Sciatic nerve (tissue), 2 donors: ENCODE measurements at regions of chr22 and their contacts with region 1.

Region 1: GRCh38 chr22:29979777-29980321 is 96.9 kb downstream of the MTMR3 start:
- DNase-seq: no peak
- ATAC-seq: no peak

Region 2: DNA sequence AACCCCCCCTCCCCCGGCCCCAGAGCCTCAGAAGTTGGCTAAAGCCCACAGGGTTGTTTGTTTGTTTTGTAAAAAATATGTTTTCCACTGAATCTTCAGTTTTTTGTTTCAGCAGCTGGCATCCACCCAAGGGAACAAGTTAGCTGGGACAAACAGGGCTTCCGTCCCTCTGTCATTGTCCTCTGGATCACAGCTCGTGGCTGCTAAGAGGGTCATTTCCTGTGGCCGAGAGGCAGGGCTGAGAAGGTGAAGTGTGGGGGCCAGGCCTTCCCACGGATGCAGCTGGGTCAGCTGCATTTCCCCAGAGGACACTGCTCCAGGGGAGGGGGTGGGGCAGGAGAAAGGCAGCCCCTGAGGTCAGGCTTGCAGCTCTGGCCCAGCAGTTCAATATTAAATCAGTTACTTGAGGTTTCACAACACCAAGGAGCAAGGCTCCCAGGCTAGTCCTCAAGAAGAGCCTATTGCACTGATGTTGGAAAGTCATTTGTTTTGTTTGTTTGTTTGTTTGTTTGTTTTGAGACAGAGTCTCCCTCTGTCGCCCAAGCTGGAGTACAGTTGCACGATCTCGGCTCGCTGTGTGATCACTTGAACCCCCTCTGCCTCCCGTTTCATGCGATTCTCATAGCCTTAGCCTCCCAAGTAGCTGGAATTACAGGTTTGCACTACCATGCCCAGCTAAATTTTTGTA is 1066.8 kb after region 1 on chr22:
- intact Hi-C with region 1: loop called (anchors 5 kb)
- DNase-seq: peak; percentile 74
- ATAC-seq: peak; percentile 93